ENCODE measurements at regions of chr1 and their contacts with region 1.

Region 1: DNA sequence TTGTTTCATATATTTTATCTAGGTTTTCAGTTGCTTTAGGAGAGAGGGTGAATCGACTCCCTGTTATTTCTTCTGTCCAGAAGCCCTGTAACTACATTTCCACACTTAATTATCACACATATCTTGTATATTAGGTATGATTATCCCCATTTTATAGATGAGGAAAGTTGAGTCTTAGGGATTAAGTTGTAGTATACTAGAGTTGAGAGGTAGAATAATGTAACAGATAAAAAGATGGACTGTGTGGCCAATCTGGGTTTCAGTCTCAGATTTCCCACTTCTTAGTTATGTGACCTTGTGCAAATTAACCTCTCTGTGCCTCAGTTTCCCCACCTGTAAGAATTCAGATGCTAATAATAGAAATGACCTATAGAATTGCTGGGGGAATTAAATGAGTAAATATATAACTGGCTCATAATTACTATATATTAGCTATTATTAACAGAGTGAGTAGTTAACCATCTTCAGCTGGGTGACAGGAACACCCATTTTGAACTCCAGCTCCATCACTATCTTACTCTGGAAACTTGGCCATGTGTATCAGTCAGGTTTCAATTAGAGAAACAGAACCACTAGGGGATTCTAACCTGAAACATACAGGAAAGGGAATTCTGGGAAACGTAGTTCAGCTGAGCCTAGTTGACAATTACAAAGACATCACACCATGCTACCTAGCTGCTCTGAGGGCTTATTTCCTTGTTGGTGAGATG is 20.4 kb upstream of the FOXO6 start:
- DNase-seq: no peak
- H3K4me3 ChIP-seq: no peak overlapping the region
- CTCF ChIP-seq: no peak
- POLR2A ChIP-seq: no peak

Region 2: DNA sequence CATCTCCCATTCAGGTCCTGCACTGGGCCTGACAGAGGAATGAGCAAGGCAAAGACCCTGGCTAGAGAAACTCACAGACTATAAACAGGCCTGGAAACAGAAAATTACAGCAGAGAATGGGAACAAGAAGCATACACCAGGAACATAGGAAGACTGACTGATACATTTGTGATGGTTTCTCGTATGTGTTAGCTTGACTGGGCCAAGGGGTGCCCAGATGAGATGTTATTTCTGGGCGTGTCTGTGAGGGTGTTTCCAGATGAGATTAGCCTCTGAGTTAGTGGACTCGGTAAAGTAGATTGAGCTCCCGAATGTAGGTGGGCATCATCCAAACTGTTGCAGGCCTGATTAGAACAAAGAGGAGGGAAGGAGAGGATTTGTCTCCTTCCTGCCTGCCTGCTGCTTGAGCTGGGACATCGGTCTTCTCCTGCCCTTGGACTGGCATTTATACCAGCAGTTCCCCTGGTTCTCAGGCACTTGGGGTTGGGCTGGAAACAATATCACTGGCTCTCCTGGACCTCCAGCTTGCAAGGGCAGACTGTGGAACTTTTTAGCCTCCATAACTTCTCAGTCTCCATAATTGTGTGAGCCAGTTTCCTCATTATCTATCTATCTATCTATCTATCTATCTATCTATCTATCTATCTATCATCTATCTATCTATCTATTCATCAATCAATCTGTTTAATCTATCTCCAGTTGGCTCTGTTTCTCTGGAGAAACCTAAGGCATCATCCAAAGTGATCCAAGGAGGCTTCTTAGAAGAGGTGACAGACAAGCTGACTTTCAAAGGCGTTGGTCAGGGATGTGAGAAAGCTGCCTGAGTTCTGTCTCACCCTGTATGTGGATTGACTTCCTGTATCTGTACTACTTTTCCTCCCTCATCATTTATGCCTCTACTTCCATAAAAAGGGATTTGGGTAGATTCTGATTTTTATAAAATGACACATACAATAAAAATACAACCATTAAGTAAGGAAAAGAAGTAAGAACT is 10.7 kb after region 1 on chr1:
- intact Hi-C with region 1: loop called (anchors 1 kb)
- DNase-seq: peak in 1 of 2 donors; percentile 43
- H3K4me3 ChIP-seq: no peak overlapping the region
- CTCF ChIP-seq: no peak
- POLR2A ChIP-seq: no peak